Sigmoid colon (tissue), 7 donors: ENCODE measurements at regions of chr17 and their contacts with region 1.

Region 1: GRCh38 chr17:37373530-37374159 is 2.1 kb upstream of the C17orf78 start:
- DNase-seq: no peak
- H3K4me3 ChIP-seq: no peak overlapping the region
- H3K27ac ChIP-seq: no peak overlapping the region
- H3K4me1 ChIP-seq: peaks cover 0 to 3% (median 0%) of the 10 kb centered on the region in 4 donors
- H3K27me3 ChIP-seq: no peaks in the 10 kb centered on the region
- CTCF ChIP-seq: peak; percentile 85 to 99 (median 96)
- EP300 ChIP-seq: no peak
- POLR2A ChIP-seq: no peak

Region 2: DNA sequence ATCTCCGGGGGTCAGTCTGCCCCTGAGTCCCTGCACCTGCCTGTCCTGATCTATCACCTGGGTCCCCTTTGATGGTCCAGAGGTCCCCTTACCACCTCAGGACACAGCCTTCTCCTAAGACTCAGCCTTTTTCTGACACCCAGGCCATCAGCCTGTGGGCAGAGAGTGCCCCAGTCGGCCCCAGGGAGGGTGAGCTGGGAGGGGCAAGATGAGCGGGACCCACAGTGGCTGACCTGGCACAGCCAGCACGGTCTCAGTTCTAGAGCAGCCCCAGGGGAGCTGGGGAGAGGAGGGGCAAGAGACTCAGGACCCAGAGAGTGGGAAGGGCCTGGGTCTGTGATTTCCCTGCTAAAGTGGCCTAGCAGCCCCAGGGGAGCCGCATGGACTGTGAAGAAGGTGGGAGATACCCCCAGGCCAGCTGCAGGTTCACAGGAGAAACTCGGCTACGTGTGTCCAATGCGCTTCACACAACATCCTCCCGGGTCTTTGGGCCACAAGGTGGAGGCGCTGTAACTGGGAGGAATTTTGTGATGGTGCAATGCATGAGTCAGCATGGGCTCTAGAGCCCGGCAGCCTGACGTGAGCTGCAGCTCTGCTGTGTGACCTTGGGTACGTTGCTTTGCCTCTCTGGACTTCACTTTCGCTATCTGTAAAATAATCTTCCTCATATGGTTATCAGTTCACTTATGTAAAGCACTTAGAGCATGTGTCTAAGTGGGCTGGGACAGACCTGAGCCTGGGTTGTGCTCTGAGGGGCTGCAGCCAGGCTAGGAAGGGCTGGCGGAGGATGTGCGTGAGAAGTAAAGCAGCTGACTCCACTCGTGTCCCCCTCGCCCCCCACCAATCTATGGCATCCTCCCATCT is 503.6 kb before region 1 on chr17:
- intact Hi-C with region 1: no loop called
- DNase-seq: no peak
- H3K4me3 ChIP-seq: no peak overlapping the region
- H3K27ac ChIP-seq: no peak overlapping the region
- H3K4me1 ChIP-seq: no peaks in the 10 kb centered on the region
- H3K27me3 ChIP-seq: peaks cover 0 to 28% (median 0%) of the 10 kb centered on the region in 3 donors
- CTCF ChIP-seq: no peak
- EP300 ChIP-seq: no peak
- POLR2A ChIP-seq: no peak

Region 3: GRCh38 chr17:37259030-37259735 is 114.5 kb before region 1 on chr17:
- intact Hi-C with region 1: loop called (anchors 10 kb)
- DNase-seq: no peak
- H3K4me3 ChIP-seq: no peak overlapping the region
- H3K27ac ChIP-seq: no peak overlapping the region
- H3K4me1 ChIP-seq: no peaks in the 10 kb centered on the region
- H3K27me3 ChIP-seq: no peaks in the 10 kb centered on the region
- CTCF ChIP-seq: no peak
- EP300 ChIP-seq: no peak
- POLR2A ChIP-seq: no peak

Region 4: DNA sequence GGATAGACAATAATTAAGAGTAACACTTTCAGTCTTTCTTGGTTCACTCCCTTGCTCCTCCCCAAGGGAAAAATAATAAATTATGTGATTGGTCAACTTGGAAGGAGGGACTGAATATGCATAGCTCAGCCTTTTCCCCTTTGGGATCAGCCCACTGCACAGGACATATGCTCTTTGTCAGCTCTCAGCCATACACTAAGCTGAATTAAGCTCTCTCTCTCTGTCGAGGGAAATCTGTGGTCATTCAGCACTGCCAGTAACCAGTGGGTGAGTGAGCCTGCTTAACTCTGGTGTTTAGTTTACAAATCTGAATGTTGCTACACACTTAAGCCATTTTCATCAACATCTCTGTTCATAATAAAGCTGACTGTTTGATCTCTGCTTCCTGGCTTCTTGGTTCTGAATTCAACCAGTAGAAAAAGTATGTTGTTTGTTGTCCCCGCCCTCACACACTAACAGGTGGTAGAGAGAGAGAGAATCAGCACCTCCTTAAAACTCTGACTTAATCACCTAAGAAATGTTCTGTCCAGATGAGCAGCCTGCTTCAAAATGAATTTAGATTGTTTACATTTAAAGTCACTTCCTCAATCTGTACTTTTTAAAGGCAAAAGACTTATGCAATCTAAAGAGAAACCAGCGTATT is 100.1 kb before region 1 on chr17:
- intact Hi-C with region 1: no loop called
- DNase-seq: no peak
- H3K4me3 ChIP-seq: no peak overlapping the region
- H3K27ac ChIP-seq: no peak overlapping the region
- H3K4me1 ChIP-seq: peaks cover 0 to 19% (median 9%) of the 10 kb centered on the region in 4 donors
- H3K27me3 ChIP-seq: no peaks in the 10 kb centered on the region
- CTCF ChIP-seq: no peak
- EP300 ChIP-seq: no peak
- POLR2A ChIP-seq: no peak